Adrenal gland (tissue), 19 donors: ENCODE measurements at regions of chr1 and their contacts with region 1.

Region 1: DNA sequence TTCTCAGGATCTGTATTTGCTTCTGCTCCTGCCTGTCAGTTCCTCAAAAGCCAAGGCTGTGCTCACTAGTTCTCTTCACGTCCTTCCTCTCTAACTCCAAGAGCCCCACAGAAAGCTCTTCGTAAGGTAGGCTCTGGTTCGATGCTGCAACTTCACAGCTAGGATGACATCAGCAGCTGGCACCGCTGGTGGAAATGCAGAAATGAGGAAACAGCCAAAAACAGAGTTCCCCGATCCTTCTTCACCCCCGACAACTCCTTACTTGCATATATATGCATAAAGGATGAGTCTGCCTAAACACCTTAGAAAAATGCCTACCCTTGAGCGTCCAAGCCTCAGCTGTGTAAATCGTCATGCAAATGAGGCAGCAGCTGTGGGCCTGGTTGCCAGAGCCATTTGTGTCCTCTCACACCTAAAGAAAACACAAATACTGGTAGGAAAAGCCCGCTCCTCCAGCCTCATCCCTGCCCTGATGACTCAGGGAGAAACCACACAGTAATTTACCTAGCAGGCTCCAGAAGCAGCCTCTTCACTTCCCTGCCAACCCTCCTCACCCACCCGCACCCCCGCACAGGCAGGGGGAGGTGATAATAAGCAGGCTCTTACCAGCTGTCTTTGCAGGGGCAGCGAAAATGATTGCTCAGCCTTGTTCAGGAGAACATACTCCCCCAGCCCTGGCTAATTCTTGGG is 28.2 kb downstream of the BATF3 start:
- DNase-seq: peak in 6 of 7 donors; percentile 35 to 75 (median 45)
- H3K4me3 ChIP-seq: no peak overlapping the region
- H3K27ac ChIP-seq: peak overlapping the region in 1 of 5 donors; percentile 31
- H3K4me1 ChIP-seq: peaks cover 6 to 28% of the 10 kb centered on the region in 2 donors
- H3K27me3 ChIP-seq: no peaks in the 10 kb centered on the region
- CTCF ChIP-seq: no peak
- POLR2A ChIP-seq: no peak

Region 2: GRCh38 chr1:212328248-212328647 is 343.2 kb before region 1 on chr1:
- intact Hi-C with region 1: no loop called
- DNase-seq: no peak
- H3K4me3 ChIP-seq: no peak overlapping the region
- H3K27ac ChIP-seq: no peak overlapping the region
- H3K4me1 ChIP-seq: no peaks in the 10 kb centered on the region
- H3K27me3 ChIP-seq: no peaks in the 10 kb centered on the region
- CTCF ChIP-seq: no peak
- POLR2A ChIP-seq: no peak

Region 3: GRCh38 chr1:212518188-212519054 is 153.1 kb before region 1 on chr1:
- intact Hi-C with region 1: no loop called
- DNase-seq: peak; percentile 47 to 84 (median 73)
- H3K4me3 ChIP-seq: no peak overlapping the region
- H3K27ac ChIP-seq: no peak overlapping the region
- H3K4me1 ChIP-seq: peaks cover 4 to 10% of the 10 kb centered on the region in 2 donors
- H3K27me3 ChIP-seq: peaks cover 26% of the 10 kb centered on the region
- CTCF ChIP-seq: no peak
- POLR2A ChIP-seq: no peak

Region 4: DNA sequence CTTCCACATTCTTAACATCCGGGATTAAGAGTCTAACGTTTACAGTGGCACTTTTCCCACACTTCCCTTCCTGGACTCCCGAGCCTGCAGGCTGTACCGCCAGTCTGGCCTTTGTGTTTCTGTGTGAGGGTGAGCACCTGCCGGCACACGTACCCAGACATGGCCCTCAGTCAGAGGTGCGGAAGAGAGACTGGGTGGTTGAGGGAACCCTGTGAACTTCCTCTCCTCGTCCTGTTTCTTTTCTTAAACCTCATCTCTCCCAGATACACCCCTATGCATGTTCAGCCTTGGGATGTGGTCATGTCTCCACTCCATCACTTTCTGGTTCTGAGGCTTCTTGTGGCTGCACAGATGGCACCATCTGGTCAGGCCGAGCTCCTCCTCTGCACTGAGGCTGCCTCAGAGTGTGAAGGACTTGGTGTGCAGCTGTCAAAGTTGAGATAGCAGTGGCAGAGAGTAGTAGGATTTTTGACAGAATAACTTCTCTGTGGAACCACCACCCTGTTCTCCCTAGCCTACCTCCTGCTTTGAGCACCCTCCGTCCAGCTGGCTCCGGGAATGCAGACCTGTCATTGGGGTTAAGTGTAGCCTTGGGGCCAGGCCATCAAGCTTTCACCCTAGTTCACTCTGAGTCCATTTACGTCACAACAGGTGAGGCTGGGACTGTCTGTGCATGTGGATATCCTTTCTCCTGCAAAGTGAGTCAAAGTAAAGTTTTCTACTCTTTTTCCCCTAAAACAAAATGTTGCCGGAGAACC is 310.3 kb after region 1 on chr1:
- intact Hi-C with region 1: loop called in 1 of 2 experiments (anchors 10 kb)
- DNase-seq: peak in 1 of 7 donors; percentile 34
- H3K4me3 ChIP-seq: no peak overlapping the region
- H3K27ac ChIP-seq: no peak overlapping the region
- H3K4me1 ChIP-seq: peaks cover 4 to 10% of the 10 kb centered on the region in 2 donors
- H3K27me3 ChIP-seq: no peaks in the 10 kb centered on the region
- CTCF ChIP-seq: no peak
- POLR2A ChIP-seq: no peak